Activated CD4-positive, alpha-beta T cell treated with anti-CD3 and anti-CD28 coated beads for 36 hours (primary cell): ENCODE measurements at regions of chr1 and their contacts with region 1.

Region 1: DNA sequence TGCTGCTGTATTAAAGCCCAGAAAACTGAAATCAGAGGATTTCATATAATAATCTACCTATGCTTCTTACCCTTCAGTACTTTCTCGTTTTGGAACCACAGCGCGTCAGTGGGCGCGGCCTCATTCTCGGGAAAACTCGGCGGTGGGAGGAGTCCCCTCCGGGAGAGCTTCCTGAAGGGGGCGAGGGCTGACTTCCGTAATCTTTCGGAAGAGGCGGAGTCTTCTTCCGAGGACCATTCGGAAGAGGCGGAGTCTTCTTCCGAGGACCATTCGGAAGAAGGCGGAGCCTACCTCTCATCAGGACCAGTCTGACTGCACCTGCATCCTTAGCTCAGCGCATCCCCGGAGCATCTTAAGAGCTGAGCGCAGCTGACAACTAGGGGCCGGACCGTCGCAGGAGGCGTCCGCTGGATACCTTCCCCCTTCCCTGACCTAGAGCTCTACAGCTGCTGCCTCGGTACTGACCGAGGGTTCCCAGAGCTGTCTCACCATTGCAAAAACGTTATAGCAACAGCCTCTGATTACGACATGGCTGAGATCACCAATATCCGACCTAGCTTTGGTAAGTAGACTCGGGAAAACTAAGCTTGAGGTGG is at the start of gene SYT11:
- DNase-seq: peak; percentile 97
- ATAC-seq: peak; percentile 89
- H3K4me3 Mint-ChIP-seq: peak within 1 kb of the TSS; percentile 78
- H3K27ac Mint-ChIP-seq: peak within 1 kb of the TSS; percentile 83
- H3K4me1 Mint-ChIP-seq: peaks cover 44% of the 10 kb centered on the region
- H3K27me3 Mint-ChIP-seq: peaks cover 3% of the 10 kb centered on the region
- total RNA-seq, gene SYT11: 14.3 to 14.8 TPM

Region 2: DNA sequence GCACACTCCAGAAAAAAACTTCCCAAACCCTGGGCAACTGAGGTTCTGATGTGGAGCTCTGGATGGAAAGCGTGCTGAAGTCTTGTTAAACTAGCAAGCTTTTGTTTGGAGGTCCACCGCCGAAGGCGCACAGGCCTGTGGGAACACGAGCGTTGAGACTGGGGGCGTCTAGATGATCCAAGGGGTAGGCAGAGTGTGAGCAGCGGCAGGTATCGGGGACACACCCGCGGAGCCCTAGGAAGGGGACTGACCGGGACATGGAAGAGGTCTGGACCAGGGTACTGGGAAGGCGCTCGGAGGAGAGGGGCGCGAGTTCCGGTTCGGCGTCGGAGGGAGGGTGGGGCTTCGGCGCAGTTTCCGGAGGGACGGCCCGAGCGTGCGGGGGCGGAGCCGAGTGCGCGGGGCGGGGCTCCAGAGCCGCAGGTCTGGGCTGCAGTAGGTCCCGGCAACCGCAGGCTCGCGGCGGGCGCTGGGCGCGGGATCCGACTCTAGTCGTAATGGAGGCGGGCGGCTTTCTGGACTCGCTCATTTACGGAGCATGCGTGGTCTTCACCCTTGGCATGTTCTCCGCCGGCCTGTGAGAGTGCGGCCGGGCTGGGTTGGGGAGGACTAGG is 723.8 kb before region 1 on chr1 and contains the start of gene SLC50A1:
- CTCF ChIA-PET with region 1: no interaction called
- POLR2A ChIA-PET with region 1: no interaction called
- intact Hi-C with region 1: loop called in 1 of 2 experiments (anchors 5 kb)
- DNase-seq: peak; percentile 97
- ATAC-seq: peak; percentile 78
- H3K4me3 Mint-ChIP-seq: peak within 1 kb of the TSS; percentile 96
- H3K27ac Mint-ChIP-seq: peak within 1 kb of the TSS; percentile 97
- H3K4me1 Mint-ChIP-seq: peaks cover 35% of the 10 kb centered on the region
- H3K27me3 Mint-ChIP-seq: no peaks in the 10 kb centered on the region
- total RNA-seq, gene SLC50A1: 50.2 to 58.0 TPM

Region 3: DNA sequence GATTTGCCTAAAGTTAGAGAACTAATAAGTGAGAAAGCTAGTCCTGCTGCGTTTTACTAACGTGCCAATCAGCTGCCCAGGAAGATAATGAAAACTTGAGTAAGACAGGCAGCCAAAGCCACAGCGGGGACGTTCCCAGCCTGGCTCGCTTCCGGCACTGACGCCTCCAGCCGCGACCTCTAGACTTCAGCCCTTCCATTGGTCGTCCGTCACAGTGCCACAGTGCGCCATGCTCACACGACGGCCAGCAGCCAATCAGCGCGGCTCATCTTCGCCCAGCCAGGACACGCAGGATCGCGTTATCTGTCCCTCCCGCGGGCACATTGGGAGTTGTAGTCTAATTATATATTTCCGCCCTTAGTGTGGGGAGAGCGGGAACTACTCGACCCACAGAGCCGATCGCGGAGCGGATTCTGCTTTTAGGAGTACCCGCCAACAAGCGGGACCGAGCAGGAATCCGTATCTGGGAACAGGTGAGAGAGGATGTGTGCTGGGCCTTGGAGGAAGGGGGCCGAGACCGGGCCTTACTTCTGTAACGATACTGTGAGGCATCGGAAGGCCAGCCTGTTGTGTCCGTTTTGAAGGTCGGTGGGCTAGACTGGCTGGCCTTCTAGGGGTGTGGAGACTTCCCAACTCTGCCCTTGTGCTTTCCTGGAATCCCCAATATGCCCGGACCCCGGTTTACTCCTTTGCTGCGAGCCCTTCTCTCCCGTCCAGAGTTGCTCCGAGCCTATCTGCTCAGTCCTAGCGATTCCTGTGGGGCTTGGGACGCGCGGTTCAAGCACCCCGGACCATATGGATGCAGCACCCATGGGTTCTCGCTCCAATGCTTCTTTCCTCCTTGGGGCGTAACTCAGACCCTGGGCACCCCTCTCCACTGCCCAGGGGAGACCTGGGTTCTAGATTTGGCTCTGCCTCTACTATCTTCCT is 550.6 kb before region 1 on chr1 and contains the start of gene FDPS:
- CTCF ChIA-PET with region 1: interaction called, 5 read pairs
- POLR2A ChIA-PET with region 1: no interaction called
- intact Hi-C with region 1: loop called in 1 of 2 experiments (anchors 1 kb)
- DNase-seq: peak; percentile 99
- ATAC-seq: peak; percentile 99
- H3K4me3 Mint-ChIP-seq: peak within 1 kb of the TSS; percentile 88
- H3K27ac Mint-ChIP-seq: peak within 1 kb of the TSS; percentile 98
- H3K4me1 Mint-ChIP-seq: peaks cover 34% of the 10 kb centered on the region
- H3K27me3 Mint-ChIP-seq: no peaks in the 10 kb centered on the region
- total RNA-seq, gene FDPS: 255 to 354 TPM

Region 4: DNA sequence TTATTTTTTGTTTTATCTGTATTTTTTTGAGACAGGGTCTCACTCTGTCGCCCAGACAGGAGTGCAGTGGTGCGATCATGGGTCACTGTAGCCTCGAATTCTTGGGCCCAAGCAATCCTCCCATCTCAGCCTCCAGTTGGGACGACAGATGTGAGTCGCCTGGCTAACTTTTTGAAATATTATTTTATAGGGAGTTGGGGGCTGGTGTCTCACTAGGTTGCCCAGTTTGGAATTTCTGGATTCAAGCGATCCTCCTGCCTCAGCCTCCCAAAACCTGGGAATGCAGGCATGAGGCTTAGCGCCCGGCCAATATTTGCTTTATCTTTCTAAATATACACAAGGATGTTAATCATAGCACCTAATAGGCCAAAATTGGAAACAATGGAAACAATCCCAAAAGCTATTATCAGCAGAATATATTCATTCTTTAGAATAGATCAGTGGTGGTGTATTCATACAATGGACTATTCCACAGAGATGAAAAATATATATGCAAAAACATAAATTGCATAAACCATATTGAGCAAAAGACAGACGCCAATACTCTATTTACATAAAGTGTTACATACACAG is 114.5 kb before region 1 on chr1:
- CTCF ChIA-PET with region 1: interaction called, 4 read pairs
- POLR2A ChIA-PET with region 1: interaction called, 3 read pairs
- intact Hi-C with region 1: loop called in 1 of 2 experiments (anchors 1 kb)
- DNase-seq: no peak
- ATAC-seq: no peak
- H3K4me3 Mint-ChIP-seq: peak overlapping the region; percentile 90
- H3K27ac Mint-ChIP-seq: peak overlapping the region; percentile 78
- H3K4me1 Mint-ChIP-seq: peaks cover 4% of the 10 kb centered on the region
- H3K27me3 Mint-ChIP-seq: no peaks in the 10 kb centered on the region

Region 5: DNA sequence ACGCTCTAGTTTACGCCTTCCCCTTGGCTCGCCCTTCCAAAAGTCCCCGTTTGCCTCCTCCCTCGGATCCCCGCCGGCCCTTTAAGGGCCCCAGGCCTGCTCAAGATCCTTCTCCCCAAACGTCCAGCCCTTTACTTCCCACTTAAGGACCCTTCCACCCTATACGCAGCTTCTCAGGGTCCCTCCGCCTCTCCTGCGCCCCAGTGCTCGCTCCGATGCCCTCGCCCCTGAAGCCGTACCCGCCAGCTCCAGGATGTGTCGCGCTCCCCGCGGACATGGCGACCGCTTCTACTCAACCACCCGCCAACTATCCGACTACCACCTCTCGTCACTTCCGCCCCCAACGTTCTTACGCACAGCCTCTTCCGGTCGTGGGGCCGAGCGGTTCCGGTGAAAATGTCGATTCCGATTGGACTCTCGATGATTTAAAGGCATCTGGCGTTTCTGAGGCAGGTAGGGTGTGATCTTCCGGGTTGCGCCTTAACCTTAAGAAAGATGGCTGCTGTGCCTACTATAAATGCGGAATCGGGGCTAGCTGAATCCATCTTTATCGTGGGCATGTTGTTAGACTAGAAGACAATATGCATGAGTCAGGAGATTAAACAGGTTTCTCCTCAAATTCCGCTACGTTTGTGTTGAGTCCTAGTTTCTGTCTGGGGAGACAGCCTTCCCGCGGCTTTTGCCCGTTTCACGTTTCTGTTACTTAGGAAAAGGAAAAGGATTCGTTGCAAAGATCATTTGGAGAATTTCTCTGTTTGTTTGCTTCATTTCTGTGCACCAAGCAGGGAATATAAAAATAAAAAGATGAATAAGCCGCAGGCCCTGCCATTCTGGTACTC is 75.0 kb after region 1 on chr1 and contains the start of gene KHDC4:
- CTCF ChIA-PET with region 1: no interaction called
- POLR2A ChIA-PET with region 1: interaction called, 4 read pairs
- intact Hi-C with region 1: loop called (anchors 1 kb)
- DNase-seq: peak; percentile 97
- ATAC-seq: peak; percentile 97
- H3K4me3 Mint-ChIP-seq: no peak within 1 kb of the TSS
- H3K27ac Mint-ChIP-seq: no peak within 1 kb of the TSS
- H3K4me1 Mint-ChIP-seq: peaks cover 46% of the 10 kb centered on the region
- H3K27me3 Mint-ChIP-seq: no peaks in the 10 kb centered on the region
- total RNA-seq, gene KHDC4: 68.7 to 97.5 TPM

Region 6: GRCh38 chr1:156054500-156055280 is 195.4 kb after region 1 on chr1 and contains the start of gene LAMTOR2:
- CTCF ChIA-PET with region 1: no interaction called
- POLR2A ChIA-PET with region 1: no interaction called
- intact Hi-C with region 1: loop called (anchors 1 kb)
- DNase-seq: peak; percentile 98
- ATAC-seq: peak; percentile 82
- H3K4me3 Mint-ChIP-seq: peak within 1 kb of the TSS; percentile 92
- H3K27ac Mint-ChIP-seq: peak within 1 kb of the TSS; percentile 88
- H3K4me1 Mint-ChIP-seq: peaks cover 18% of the 10 kb centered on the region
- H3K27me3 Mint-ChIP-seq: no peaks in the 10 kb centered on the region
- total RNA-seq, gene LAMTOR2: 26.1 to 50.3 TPM

Region 7: GRCh38 chr1:156338180-156338973 is 479.0 kb after region 1 on chr1 and contains the starts of genes CCT3 and TSACC:
- CTCF ChIA-PET with region 1: no interaction called
- POLR2A ChIA-PET with region 1: no interaction called
- intact Hi-C with region 1: loop called in 1 of 2 experiments (anchors 1 kb)
- DNase-seq: peak; percentile 99
- ATAC-seq: peak; percentile 96
- H3K4me3 Mint-ChIP-seq: peak within 1 kb of the TSS; percentile 98
- H3K27ac Mint-ChIP-seq: peak within 1 kb of the TSS; percentile 96
- H3K4me1 Mint-ChIP-seq: peaks cover 29% of the 10 kb centered on the region
- H3K27me3 Mint-ChIP-seq: no peaks in the 10 kb centered on the region
- total RNA-seq, gene CCT3: 297 to 406 TPM
- total RNA-seq, gene TSACC: 0.25 to 0.83 TPM

Region 8: DNA sequence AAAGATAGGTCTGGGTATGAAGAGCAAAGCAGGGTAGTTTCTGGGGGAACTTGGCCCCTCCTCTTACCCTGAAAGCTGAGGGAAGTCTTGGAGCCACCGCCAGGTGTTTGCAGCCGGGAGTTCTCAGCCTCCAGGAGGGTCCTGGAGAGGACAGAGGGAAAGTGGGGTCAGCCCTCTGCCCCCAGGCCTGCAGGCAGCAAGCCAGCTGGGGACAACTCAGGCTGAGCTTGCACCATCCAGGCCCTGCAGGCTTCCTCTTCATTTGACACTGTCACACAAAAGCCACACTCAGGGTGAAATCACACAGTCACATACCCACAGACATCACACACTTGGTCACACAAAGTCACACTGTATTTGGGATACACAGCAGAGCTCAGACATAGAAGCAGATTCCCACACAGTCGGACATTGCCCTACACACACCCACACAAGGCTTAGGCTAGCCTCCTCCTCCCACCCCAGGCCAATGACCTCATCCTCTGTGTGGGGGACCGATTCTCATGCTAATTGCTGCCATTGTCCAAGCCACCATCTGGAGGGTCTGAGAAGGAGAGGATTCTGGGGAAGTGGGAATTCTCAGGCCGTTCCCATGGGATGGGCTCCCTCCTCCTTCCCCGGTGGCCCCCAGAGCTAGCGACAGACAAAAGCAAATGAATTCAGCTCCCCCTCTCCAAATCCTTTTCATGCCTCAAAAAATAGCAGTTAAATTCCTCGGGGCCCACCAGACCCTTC is 814.2 kb after region 1 on chr1:
- CTCF ChIA-PET with region 1: no interaction called
- POLR2A ChIA-PET with region 1: no interaction called
- intact Hi-C with region 1: no loop called
- DNase-seq: no peak
- ATAC-seq: no peak
- H3K4me3 Mint-ChIP-seq: no peak overlapping the region
- H3K27ac Mint-ChIP-seq: no peak overlapping the region
- H3K4me1 Mint-ChIP-seq: peaks cover 11% of the 10 kb centered on the region
- H3K27me3 Mint-ChIP-seq: peaks cover 33% of the 10 kb centered on the region